ENCODE measurements at regions of chr6 and their contacts with region 1.

Region 1: GRCh38 chr6:125956506-125957390 is at the start of gene HINT3:
- DNase-seq: peak; percentile 94 to 100 (median 98)

Region 2: DNA sequence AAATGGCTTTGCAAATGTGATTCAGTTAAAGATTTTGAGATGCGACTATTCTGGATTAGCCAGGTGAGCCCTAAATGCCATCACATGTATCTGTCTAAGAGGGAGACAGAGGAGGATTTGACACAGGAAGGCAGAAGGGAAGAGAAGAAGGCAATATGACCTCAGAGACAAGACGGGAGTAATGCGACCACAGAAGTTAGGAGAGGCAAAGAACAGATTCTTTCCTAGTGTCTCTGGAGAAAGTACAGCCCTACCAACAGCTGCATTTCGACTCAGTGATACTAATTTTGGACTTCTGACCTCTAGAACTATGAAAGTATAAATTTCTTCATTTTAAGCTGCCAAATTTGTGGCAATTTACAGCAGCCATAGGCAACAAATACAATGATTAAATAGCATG is 827.4 kb before region 1 on chr6:
- intact Hi-C with region 1: loop called (anchors 5 kb)
- DNase-seq: no peak

Region 3: GRCh38 chr6:125779924-125780539 is 176.7 kb before region 1 on chr6:
- intact Hi-C with region 1: loop called (anchors 2 kb)
- DNase-seq: peak; percentile 74 to 98 (median 82)

Region 4: GRCh38 chr6:125858427-125859320 is 98.1 kb before region 1 on chr6:
- intact Hi-C with region 1: loop called (anchors 5 kb)
- DNase-seq: peak in 7 of 10 donors; percentile 30 to 92 (median 63)